PC-3 (cell line): ENCODE measurements at regions of chr3 and their contacts with region 1.

Region 1: DNA sequence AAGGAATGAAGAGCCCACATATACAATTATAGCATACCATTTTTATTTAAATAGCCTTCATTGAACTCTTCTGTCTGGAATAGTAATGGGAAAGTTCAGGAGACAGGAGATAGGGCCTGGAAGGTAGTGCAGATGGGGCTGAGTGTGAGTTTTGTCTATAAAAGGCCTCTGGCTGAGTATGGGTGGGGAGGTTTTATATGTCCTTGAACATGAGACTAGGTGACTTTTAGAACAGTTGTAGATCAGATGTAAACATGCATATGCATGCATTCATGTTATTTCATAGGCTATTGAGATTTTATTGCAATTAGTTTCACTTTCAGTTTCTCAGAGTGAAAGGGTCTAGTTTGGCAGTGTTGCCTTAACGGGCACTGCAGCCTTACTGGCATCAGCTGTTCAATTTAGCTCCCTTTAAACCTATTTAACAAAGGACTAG is 27.1 kb downstream of the CGGBP1 start:
- DNase-seq: peak; percentile 49
- ATAC-seq: peak; percentile 80
- H3K4me3 ChIP-seq: peak overlapping the region; percentile 69
- H3K27ac ChIP-seq: no peak overlapping the region
- H3K4me1 ChIP-seq: peaks cover 9% of the 10 kb centered on the region
- H3K27me3 ChIP-seq: no peaks in the 10 kb centered on the region
- CTCF ChIP-seq: no peak

Region 2: GRCh38 chr3:87828046-87828445 is 203.6 kb before region 1 on chr3:
- CTCF ChIA-PET with region 1: no interaction called
- POLR2A ChIA-PET with region 1: no interaction called
- intact Hi-C with region 1: no loop called
- DNase-seq: no peak
- ATAC-seq: no peak
- H3K4me3 ChIP-seq: no peak overlapping the region
- H3K27ac ChIP-seq: no peak overlapping the region
- H3K4me1 ChIP-seq: peaks cover 7% of the 10 kb centered on the region; the same call in 1 of the 2 replicates
- H3K27me3 ChIP-seq: no peaks in the 10 kb centered on the region
- CTCF ChIP-seq: no peak

Region 3: GRCh38 chr3:88058591-88059368 is 27.1 kb after region 1 on chr3 and contains the starts of genes CGGBP1 and ZNF654:
- CTCF ChIA-PET with region 1: no interaction called
- POLR2A ChIA-PET with region 1: interaction called, 3 read pairs
- intact Hi-C with region 1: loop called (anchors 2 kb)
- DNase-seq: peak; percentile 99
- ATAC-seq: peak; percentile 91
- H3K4me3 ChIP-seq: peak within 1 kb of the TSS; percentile 96
- H3K27ac ChIP-seq: peak within 1 kb of the TSS; percentile 71
- H3K4me1 ChIP-seq: peaks cover 29% of the 10 kb centered on the region
- H3K27me3 ChIP-seq: no peaks in the 10 kb centered on the region
- CTCF ChIP-seq: no peak
- total RNA-seq, gene CGGBP1: 27.0 and 37.1 TPM in 2 replicates
- total RNA-seq, gene ZNF654: 5.0 and 6.9 TPM in 2 replicates

Region 4: DNA sequence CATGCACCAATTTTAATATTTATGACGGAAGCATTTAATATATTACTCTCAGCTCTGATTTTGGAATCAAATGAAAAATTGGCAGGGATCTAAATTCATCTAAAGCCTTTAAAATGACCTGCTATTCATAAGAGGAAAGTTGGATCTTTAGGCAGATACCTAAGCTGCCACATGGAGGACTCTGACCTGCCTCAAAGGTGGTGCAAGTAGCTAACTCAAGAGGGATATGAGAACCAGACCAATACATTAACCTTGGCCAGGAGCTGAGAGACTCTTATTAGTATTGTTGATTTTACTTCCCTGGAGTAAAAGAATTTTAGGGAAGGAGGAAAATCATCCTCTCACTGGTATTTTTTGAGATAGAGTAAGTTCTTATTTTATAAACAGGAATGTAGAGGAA is 45.1 kb after region 1 on chr3:
- CTCF ChIA-PET with region 1: no interaction called
- POLR2A ChIA-PET with region 1: no interaction called
- intact Hi-C with region 1: loop called (anchors 1 kb)
- DNase-seq: no peak
- ATAC-seq: no peak
- H3K4me3 ChIP-seq: no peak overlapping the region
- H3K27ac ChIP-seq: no peak overlapping the region
- H3K4me1 ChIP-seq: no peaks in the 10 kb centered on the region
- H3K27me3 ChIP-seq: no peaks in the 10 kb centered on the region
- CTCF ChIP-seq: no peak

Region 5: GRCh38 chr3:88113311-88114162 is 81.9 kb after region 1 on chr3:
- CTCF ChIA-PET with region 1: no interaction called
- POLR2A ChIA-PET with region 1: no interaction called
- intact Hi-C with region 1: loop called (anchors 5 kb)
- DNase-seq: peak; percentile 86
- ATAC-seq: peak; percentile 97
- H3K4me3 ChIP-seq: no peak overlapping the region
- H3K27ac ChIP-seq: no peak overlapping the region
- H3K4me1 ChIP-seq: no peaks in the 10 kb centered on the region
- H3K27me3 ChIP-seq: no peaks in the 10 kb centered on the region
- CTCF ChIP-seq: peak; percentile 93